ENCODE measurements at regions of chr14 and their contacts with region 1.

Region 1: DNA sequence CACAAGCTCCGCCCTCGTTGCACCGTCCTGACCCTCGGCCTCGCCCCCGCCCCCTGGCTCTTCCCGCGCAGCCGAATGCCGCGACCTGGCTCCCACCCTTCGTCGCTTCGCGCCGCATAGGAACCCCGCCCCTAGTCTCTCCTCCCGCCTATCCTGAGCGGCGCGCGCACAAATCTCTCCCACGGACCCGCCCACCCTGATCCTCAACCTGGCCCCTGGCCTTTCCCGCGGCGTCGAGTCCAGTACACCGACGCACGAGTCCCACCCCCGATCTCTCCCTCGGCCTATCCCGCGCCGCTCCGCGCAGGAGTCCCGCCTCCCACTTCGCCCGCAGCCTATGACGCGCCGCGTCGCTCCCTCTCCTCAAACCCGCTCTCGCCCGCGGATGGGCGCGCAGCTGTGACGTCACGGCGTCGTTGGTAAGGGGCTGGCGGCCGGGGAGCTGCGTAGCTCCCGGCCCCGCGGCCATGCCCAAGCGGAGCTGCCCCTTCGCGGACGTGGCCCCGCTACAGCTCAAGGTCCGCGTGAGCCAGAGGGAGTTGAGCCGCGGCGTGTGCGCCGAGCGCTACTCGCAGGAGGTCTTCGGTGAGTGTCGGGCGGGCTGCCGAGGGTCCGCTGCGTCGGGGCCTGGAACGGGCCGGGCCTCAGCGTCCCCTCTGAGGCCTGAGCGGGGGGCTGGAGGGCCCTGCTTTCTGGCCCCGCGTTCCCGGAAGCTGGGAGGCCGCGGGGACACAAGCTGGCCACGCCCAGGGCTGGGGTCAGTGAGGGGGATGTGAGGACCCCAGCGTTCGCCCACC is at the start of gene SIVA1:
- DNase-seq: peak; percentile 100
- ATAC-seq: peak; percentile 92
- H3K4me3 Mint-ChIP-seq: peak within 1 kb of the TSS; percentile 84
- H3K27ac Mint-ChIP-seq: peak within 1 kb of the TSS; percentile 83
- H3K4me1 Mint-ChIP-seq: peaks cover 33% of the 10 kb centered on the region
- H3K27me3 Mint-ChIP-seq: no peaks in the 10 kb centered on the region
- total RNA-seq, gene SIVA1: 47.1 to 97.1 TPM

Region 2: GRCh38 chr14:104078031-104078455 is 674.9 kb before region 1 on chr14:
- CTCF ChIA-PET with region 1: no interaction called
- POLR2A ChIA-PET with region 1: no interaction called
- intact Hi-C with region 1: loop called in 1 of 2 experiments (anchors 1 kb)
- DNase-seq: peak; percentile 92
- ATAC-seq: peak; percentile 98
- H3K4me3 Mint-ChIP-seq: no peak overlapping the region
- H3K27ac Mint-ChIP-seq: peak overlapping the region; percentile 47
- H3K4me1 Mint-ChIP-seq: peaks cover 15% of the 10 kb centered on the region
- H3K27me3 Mint-ChIP-seq: peaks cover 6% of the 10 kb centered on the region

Region 3: GRCh38 chr14:104768437-104769323 is 15.7 kb after region 1 on chr14:
- CTCF ChIA-PET with region 1: interaction called, 24 read pairs
- POLR2A ChIA-PET with region 1: interaction called, 8 read pairs
- intact Hi-C with region 1: loop called in 1 of 2 experiments (anchors 1 kb)
- DNase-seq: peak; percentile 96
- ATAC-seq: peak; percentile 95
- H3K4me3 Mint-ChIP-seq: no peak overlapping the region
- H3K27ac Mint-ChIP-seq: no peak overlapping the region
- H3K4me1 Mint-ChIP-seq: peaks cover 8% of the 10 kb centered on the region
- H3K27me3 Mint-ChIP-seq: no peaks in the 10 kb centered on the region

Region 4: DNA sequence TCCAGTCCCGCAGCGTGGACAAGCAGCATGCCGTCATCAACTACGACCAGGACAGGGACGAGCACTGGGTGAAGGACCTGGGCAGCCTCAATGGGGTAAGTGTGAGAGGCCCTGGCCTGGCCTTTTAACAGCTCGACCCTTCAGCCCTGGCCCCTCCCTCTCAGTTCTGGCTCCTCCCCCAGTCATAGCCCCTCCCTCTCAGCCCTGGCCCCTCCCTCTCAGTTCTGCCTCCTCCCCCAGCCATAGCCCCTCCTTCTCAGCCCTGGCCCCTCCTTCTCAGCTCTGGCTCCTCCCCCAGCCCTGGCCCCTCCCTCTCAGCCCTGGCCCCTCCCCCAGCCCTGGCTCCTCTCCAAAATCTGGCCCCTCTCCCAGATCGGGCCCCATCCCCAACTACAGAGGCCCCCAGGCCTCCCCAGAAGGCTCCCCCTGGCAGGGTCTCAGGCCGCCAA is 123.3 kb after region 1 on chr14:
- CTCF ChIA-PET with region 1: no interaction called
- POLR2A ChIA-PET with region 1: no interaction called
- intact Hi-C with region 1: loop called in 1 of 2 experiments (anchors 1 kb)
- DNase-seq: peak; percentile 69
- ATAC-seq: peak; percentile 99
- H3K4me3 Mint-ChIP-seq: no peak overlapping the region
- H3K27ac Mint-ChIP-seq: no peak overlapping the region
- H3K4me1 Mint-ChIP-seq: no peaks in the 10 kb centered on the region
- H3K27me3 Mint-ChIP-seq: no peaks in the 10 kb centered on the region

Region 5: GRCh38 chr14:104895786-104896661 is 143.1 kb after region 1 on chr14:
- CTCF ChIA-PET with region 1: no interaction called
- POLR2A ChIA-PET with region 1: no interaction called
- intact Hi-C with region 1: no loop called
- DNase-seq: peak; percentile 5
- ATAC-seq: no peak
- H3K4me3 Mint-ChIP-seq: no peak overlapping the region
- H3K27ac Mint-ChIP-seq: no peak overlapping the region
- H3K4me1 Mint-ChIP-seq: peaks cover under 1% of the 10 kb centered on the region
- H3K27me3 Mint-ChIP-seq: no peaks in the 10 kb centered on the region

Region 6: DNA sequence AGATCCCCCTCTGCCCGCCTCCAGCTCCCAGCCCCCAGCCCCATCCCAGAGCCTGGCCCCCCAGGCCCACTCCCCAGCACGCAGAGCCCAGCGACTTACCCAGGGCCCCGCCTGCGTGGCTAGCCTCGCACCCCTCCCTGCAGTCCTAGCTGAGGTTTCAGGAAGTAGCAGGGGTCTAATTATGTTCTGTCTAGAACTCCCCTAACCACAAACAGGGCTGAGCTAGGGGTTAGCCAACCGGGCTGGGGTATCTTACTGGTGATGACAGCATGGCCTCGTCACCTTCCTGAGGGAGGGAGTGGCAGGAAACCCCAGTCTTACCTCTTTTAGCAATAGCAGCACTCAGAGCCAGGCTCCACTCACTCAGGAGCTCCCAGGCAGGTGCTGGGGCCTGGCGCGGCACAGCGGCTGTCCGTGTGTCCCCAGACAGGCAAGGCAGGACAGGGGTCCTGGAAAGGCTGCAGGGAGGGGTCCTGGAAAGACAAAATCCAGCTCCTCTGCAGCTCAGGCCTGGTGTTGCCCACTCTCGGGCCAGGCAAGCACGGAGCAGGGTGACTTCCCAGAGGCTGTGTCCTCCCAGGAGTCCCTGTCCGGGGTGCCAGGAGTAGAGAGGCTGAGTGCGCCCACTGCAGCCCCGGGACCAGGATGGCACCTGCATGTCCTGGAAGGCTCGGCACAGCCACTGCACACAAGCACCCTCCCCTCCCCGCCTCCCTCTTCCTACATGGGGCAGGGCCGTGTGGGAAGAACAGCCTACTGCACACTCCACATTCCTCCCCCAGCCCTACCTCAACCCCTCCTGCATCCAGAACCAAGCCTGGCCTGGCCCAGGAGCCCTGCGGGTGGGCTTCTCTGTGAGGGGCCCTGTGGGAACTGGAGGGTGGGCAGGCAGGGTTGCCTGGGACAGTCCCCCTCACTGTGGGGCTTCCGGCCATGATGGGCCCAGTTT is 312.6 kb after region 1 on chr14 and contains the start of gene GPR132:
- CTCF ChIA-PET with region 1: no interaction called
- POLR2A ChIA-PET with region 1: interaction called, 4 read pairs
- intact Hi-C with region 1: loop called in 1 of 2 experiments (anchors 2 kb)
- DNase-seq: peak; percentile 93
- ATAC-seq: peak; percentile 78
- H3K4me3 Mint-ChIP-seq: peak within 1 kb of the TSS; percentile 92
- H3K27ac Mint-ChIP-seq: peak within 1 kb of the TSS; percentile 96
- H3K4me1 Mint-ChIP-seq: peaks cover 74% of the 10 kb centered on the region
- H3K27me3 Mint-ChIP-seq: no peaks in the 10 kb centered on the region
- total RNA-seq, gene GPR132: 27.7 to 35.4 TPM

Region 7: GRCh38 chr14:105490572-105491366 is 737.8 kb after region 1 on chr14 and contains the start of gene TEDC1:
- CTCF ChIA-PET with region 1: no interaction called
- POLR2A ChIA-PET with region 1: no interaction called
- intact Hi-C with region 1: loop called in 1 of 2 experiments (anchors 1 kb)
- DNase-seq: peak; percentile 100
- ATAC-seq: peak; percentile 80
- H3K4me3 Mint-ChIP-seq: peak within 1 kb of the TSS; percentile 81
- H3K27ac Mint-ChIP-seq: peak within 1 kb of the TSS; percentile 86
- H3K4me1 Mint-ChIP-seq: peaks cover 22% of the 10 kb centered on the region
- H3K27me3 Mint-ChIP-seq: no peaks in the 10 kb centered on the region
- total RNA-seq, gene TEDC1: 21.7 to 31.8 TPM